Naive thymus-derived CD4-positive, alpha-beta T cell (primary cell): ENCODE measurements at regions of chr7 and their contacts with region 1.

Region 1: GRCh38 chr7:138752568-138753518 is 45.0 kb upstream of the TMEM213 start:
- DNase-seq: peak; percentile 66 to 99 (median 96)
- ATAC-seq: peak; percentile 95
- H3K4me3 ChIP-seq: no peak overlapping the region
- H3K4me3 Mint-ChIP-seq: peak overlapping the region; percentile 61 to 81 (median 72)
- H3K27ac ChIP-seq: peak overlapping the region; percentile 60
- H3K27ac Mint-ChIP-seq: peak overlapping the region; percentile 89 to 99 (median 96)
- H3K4me1 ChIP-seq: peaks cover 22 to 25% of the 10 kb centered on the region in 2 donors
- H3K4me1 Mint-ChIP-seq: peaks cover 34 to 78% (median 61%) of the 10 kb centered on the region in 7 donors
- H3K27me3 ChIP-seq: no peaks in the 10 kb centered on the region
- H3K27me3 Mint-ChIP-seq: peaks cover 0 to 4% (median 0%) of the 10 kb centered on the region in 5 donors

Region 2: GRCh38 chr7:138161600-138162081 is 591.2 kb before region 1 on chr7:
- CTCF ChIA-PET with region 1: interaction called, 3 read pairs
- POLR2A ChIA-PET with region 1: no interaction called
- intact Hi-C with region 1: loop called (anchors 1 to 5 kb)
- DNase-seq: peak; percentile 24 to 87 (median 79)
- ATAC-seq: peak; percentile 99
- H3K4me3 ChIP-seq: no peak overlapping the region
- H3K4me3 Mint-ChIP-seq: no peak overlapping the region
- H3K27ac ChIP-seq: no peak overlapping the region
- H3K27ac Mint-ChIP-seq: no peak overlapping the region
- H3K4me1 ChIP-seq: no peaks in the 10 kb centered on the region
- H3K4me1 Mint-ChIP-seq: no peaks in the 10 kb centered on the region
- H3K27me3 ChIP-seq: no peaks in the 10 kb centered on the region
- H3K27me3 Mint-ChIP-seq: peaks cover 0 to 7% (median 0%) of the 10 kb centered on the region in 5 donors

Region 3: GRCh38 chr7:138738551-138739335 is 14.1 kb before region 1 on chr7:
- CTCF ChIA-PET with region 1: interaction called, 10 read pairs
- POLR2A ChIA-PET with region 1: interaction called, 6 read pairs
- intact Hi-C with region 1: loop called in 1 of 2 experiments (anchors 1 kb)
- DNase-seq: peak; percentile 70 to 86 (median 80)
- ATAC-seq: peak; percentile 92
- H3K4me3 ChIP-seq: no peak overlapping the region
- H3K4me3 Mint-ChIP-seq: no peak overlapping the region
- H3K27ac ChIP-seq: no peak overlapping the region
- H3K27ac Mint-ChIP-seq: peak overlapping the region in 7 of 9 donors; percentile 1 to 83 (median 65)
- H3K4me1 ChIP-seq: no peaks in the 10 kb centered on the region
- H3K4me1 Mint-ChIP-seq: peaks cover 0 to 7% (median 4%) of the 10 kb centered on the region in 7 donors
- H3K27me3 ChIP-seq: no peaks in the 10 kb centered on the region
- H3K27me3 Mint-ChIP-seq: no peaks in the 10 kb centered on the region

Region 4: DNA sequence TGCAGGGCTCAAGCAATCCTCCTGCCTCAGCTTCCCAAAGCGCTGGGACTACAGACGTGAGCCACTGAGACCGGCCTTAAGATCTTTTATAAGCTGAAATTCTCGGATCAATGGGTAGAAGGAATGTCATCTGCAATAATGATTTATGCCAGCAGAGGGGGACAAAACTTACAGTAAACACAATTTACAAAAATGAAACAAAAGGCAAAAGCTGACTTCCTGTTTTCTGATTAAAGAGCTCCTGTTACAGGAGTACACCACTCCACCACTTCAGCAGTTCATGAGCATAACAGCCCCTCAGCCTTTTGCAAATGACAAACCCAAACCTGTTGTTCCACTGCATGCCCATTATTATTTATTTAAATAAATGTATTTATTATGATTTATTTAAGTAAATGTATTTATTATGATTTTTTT is 133.7 kb after region 1 on chr7:
- CTCF ChIA-PET with region 1: interaction called, 3 read pairs
- POLR2A ChIA-PET with region 1: no interaction called
- intact Hi-C with region 1: loop called in 1 of 2 experiments (anchors 1 kb)
- DNase-seq: peak in 7 of 9 donors; percentile 63 to 82 (median 78)
- ATAC-seq: peak; percentile 91
- H3K4me3 ChIP-seq: no peak overlapping the region
- H3K4me3 Mint-ChIP-seq: peak overlapping the region in 7 of 10 donors; percentile 41 to 67 (median 60)
- H3K27ac ChIP-seq: no peak overlapping the region
- H3K27ac Mint-ChIP-seq: peak overlapping the region; percentile 9 to 88 (median 61)
- H3K4me1 ChIP-seq: peaks cover 3 to 4% of the 10 kb centered on the region in 2 donors
- H3K4me1 Mint-ChIP-seq: peaks cover 3 to 32% (median 23%) of the 10 kb centered on the region in 7 donors
- H3K27me3 ChIP-seq: no peaks in the 10 kb centered on the region
- H3K27me3 Mint-ChIP-seq: peaks cover 0 to 13% (median 0%) of the 10 kb centered on the region in 5 donors

Region 5: GRCh38 chr7:139043823-139044812 is 291.3 kb after region 1 on chr7:
- CTCF ChIA-PET with region 1: no interaction called
- POLR2A ChIA-PET with region 1: no interaction called
- intact Hi-C with region 1: loop called in 1 of 2 experiments (anchors 5 kb)
- DNase-seq: peak in 5 of 9 donors; percentile 36 to 71 (median 40)
- ATAC-seq: peak; percentile 81
- H3K4me3 ChIP-seq: no peak overlapping the region
- H3K4me3 Mint-ChIP-seq: peak overlapping the region in 9 of 10 donors; percentile 4 to 87 (median 58)
- H3K27ac ChIP-seq: peak overlapping the region; percentile 50
- H3K27ac Mint-ChIP-seq: peak overlapping the region; percentile 48 to 89 (median 79)
- H3K4me1 ChIP-seq: peaks cover 36 to 38% of the 10 kb centered on the region in 2 donors
- H3K4me1 Mint-ChIP-seq: peaks cover 35 to 77% (median 67%) of the 10 kb centered on the region in 7 donors
- H3K27me3 ChIP-seq: no peaks in the 10 kb centered on the region
- H3K27me3 Mint-ChIP-seq: no peaks in the 10 kb centered on the region

Region 6: DNA sequence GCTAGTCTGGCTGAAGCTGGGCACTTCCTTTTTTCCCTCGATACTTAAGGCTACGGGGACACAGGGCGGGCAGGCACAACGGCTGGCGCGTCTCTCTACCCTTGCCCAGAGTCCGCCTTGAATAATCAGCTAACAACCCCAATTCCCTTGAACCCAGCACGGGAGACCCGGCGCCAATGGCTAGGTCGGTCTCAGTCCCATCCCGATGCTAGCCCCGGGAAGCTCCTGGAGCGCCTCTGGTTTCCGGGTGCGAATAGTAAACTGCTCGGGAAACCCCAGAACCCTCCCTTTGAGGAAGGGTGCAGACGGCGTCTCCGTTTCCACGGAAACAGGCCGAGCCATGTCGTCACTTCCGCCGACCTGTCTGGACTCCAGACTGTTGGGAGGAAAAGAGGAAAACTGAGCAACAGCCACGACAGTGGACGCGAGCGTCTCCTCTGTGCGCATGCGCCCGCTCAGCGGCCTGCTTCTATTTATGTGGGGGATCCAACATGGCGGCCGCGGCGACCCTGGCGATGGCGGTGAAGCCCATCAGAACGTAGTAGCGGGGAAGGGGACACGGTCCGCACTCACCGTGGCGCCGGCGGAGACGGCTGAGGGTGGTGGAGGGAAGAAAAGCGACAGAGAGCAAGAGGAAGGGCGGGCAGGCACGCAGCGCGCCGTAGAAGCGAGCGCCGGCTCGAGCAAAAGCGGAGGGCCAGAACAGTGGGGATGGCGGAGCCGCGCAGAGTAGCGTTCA is 478.1 kb after region 1 on chr7 and contains the start of gene UBN2:
- CTCF ChIA-PET with region 1: no interaction called
- POLR2A ChIA-PET with region 1: no interaction called
- intact Hi-C with region 1: loop called in 1 of 2 experiments (anchors 5 kb)
- DNase-seq: peak; percentile 68 to 91 (median 76)
- ATAC-seq: peak; percentile 86
- H3K4me3 ChIP-seq: peak within 1 kb of the TSS; percentile 77
- H3K4me3 Mint-ChIP-seq: peak within 1 kb of the TSS; percentile 96 to 100 (median 99)
- H3K27ac ChIP-seq: peak within 1 kb of the TSS; percentile 85
- H3K27ac Mint-ChIP-seq: peak within 1 kb of the TSS; percentile 93 to 98 (median 96)
- H3K4me1 ChIP-seq: no peaks in the 10 kb centered on the region
- H3K4me1 Mint-ChIP-seq: peaks cover 24 to 33% (median 29%) of the 10 kb centered on the region in 7 donors
- H3K27me3 ChIP-seq: no peaks in the 10 kb centered on the region
- H3K27me3 Mint-ChIP-seq: peaks cover 0 to 36% (median 5%) of the 10 kb centered on the region in 5 donors
- total RNA-seq, gene UBN2: 16.2 to 31.2 (median 20.5) TPM